ENCODE measurements at regions of chr5 and their contacts with region 1.

Region 1: DNA sequence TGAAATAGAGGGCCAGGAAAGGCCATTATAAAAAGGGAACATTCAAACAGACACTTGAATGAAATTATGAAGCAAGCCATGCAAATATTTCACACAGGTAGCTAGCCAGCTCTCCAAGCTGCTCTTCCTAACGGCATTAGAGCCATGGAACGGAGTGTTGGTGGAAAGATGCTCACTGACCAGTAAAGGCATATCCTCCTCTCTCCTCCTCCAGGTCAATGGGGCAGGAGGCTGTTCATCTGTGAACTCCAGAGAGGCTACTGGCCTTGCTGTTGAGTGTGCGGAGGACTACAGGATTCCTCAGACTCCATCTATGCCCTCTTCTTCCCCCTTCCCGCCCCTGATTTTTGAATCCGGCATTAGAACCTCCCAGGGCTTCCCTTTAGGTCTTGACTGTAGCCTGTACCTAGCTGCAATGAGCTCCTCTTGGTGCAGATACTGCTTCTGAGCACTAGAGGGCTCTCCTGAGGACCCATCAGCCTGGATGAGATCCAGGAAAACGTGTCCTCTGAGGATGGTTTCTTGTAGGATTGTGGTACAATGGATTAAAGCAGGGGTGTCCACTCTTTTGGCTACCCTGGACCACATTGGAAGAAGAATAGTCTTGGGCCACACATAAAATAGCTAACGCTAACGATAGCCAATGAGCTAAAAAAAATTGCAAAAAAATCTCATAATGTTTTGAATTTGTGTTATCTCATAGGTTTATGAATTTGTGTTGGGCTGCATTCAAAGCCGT is 162.2 kb downstream of the SREK1 start:
- DNase-seq: peak; percentile 10
- H3K4me3 Mint-ChIP-seq: no peak overlapping the region
- H3K27ac Mint-ChIP-seq: no peak overlapping the region
- H3K4me1 Mint-ChIP-seq: peaks cover 6% of the 10 kb centered on the region
- H3K27me3 Mint-ChIP-seq: peaks cover 9% of the 10 kb centered on the region

Region 2: GRCh38 chr5:66324357-66324756 is 18.1 kb after region 1 on chr5:
- intact Hi-C with region 1: no loop called
- DNase-seq: no peak
- H3K4me3 Mint-ChIP-seq: no peak overlapping the region
- H3K27ac Mint-ChIP-seq: no peak overlapping the region
- H3K4me1 Mint-ChIP-seq: no peaks in the 10 kb centered on the region
- H3K27me3 Mint-ChIP-seq: no peaks in the 10 kb centered on the region

Region 3: GRCh38 chr5:66498791-66499207 is 192.5 kb after region 1 on chr5:
- intact Hi-C with region 1: loop called (anchors 5 kb)
- DNase-seq: no peak
- H3K4me3 Mint-ChIP-seq: no peak overlapping the region
- H3K27ac Mint-ChIP-seq: no peak overlapping the region
- H3K4me1 Mint-ChIP-seq: no peaks in the 10 kb centered on the region
- H3K27me3 Mint-ChIP-seq: no peaks in the 10 kb centered on the region

Region 4: DNA sequence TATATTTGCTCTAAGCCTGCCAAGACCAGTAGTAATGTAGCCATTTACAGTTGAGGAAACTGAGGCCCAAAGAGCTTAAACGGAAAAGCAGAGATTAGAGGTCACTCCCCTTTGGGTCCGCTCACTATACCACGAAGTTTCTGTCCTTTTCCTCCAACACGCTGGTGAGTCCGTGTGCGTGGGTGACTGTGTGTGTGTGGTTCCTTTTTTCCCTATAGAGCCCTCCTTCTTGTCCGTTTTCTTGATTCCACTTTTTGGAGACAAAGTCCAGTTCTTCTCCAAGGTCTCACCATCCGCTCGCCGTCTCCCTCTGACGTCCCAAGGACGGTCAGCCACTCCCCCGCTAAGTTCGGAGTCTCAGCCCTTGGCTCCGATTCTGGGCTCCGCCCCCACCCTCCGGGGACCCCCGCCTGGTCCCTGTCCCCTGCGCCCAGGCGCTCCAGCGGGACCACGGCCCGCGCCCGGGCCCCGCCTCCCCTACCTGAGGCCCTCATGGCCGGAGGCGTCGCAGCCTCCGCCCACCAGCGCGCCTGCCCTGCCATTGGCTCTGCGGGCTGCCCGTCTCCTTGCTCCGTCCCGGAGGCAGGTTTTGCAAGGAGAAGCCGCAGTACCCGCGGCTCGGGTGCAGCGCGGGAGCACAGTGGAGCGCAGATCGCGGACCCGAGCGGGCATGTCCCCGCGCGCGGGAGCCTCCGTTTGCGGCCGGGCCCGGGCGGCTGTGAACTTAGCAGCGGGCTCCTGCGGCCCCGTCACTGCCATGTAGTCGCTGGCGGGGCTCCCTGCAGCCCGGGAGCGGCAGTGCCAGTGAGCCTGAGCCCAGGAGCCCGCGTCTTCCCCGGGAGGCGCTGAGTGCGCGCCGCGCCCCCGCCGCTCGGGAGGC is 289.7 kb after region 1 on chr5 and contains the start of gene MAST4:
- intact Hi-C with region 1: loop called (anchors 5 kb)
- DNase-seq: peak; percentile 69
- H3K4me3 Mint-ChIP-seq: peak within 1 kb of the TSS; percentile 80
- H3K27ac Mint-ChIP-seq: no peak within 1 kb of the TSS
- H3K4me1 Mint-ChIP-seq: peaks cover 10% of the 10 kb centered on the region
- H3K27me3 Mint-ChIP-seq: peaks cover 64% of the 10 kb centered on the region
- total RNA-seq, gene MAST4: 5.4 and 6.1 TPM in 2 replicates

Region 5: DNA sequence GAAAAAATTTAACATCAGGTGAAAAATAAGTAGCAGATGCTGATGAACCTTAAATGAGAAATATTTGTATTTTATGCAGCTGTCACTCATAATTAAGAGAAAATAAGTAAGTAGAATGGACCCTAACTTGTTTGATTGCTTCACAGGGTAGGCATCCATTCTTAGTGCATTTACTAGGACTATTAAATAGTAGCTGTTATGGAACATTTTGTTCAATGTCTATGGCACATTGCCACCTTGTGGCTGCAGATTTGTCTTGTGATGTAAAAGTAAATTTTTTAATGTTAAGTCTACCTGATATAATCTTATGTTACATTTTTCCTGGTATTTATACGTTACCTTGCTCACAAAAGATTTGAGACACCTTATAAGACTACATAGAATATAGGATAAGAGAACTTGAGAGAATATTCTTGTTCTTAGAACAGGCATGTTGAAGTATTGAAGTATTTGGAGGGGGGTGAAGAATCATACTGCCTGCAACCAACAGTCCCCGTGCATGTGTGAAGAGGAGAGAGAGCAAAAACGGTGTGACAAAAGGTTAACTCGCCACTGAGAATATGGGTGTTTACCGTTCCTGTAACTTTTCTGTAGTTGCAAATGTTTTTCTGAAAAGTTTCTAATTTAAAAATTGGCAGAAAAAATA is 451.0 kb after region 1 on chr5:
- intact Hi-C with region 1: loop called (anchors 1 kb)
- DNase-seq: no peak
- H3K4me3 Mint-ChIP-seq: no peak overlapping the region
- H3K27ac Mint-ChIP-seq: no peak overlapping the region
- H3K4me1 Mint-ChIP-seq: no peaks in the 10 kb centered on the region
- H3K27me3 Mint-ChIP-seq: peaks cover 28% of the 10 kb centered on the region

Region 6: GRCh38 chr5:66864331-66864840 is 558.1 kb after region 1 on chr5:
- intact Hi-C with region 1: loop called (anchors 5 kb)
- DNase-seq: no peak
- H3K4me3 Mint-ChIP-seq: no peak overlapping the region
- H3K27ac Mint-ChIP-seq: no peak overlapping the region
- H3K4me1 Mint-ChIP-seq: peaks cover 16% of the 10 kb centered on the region
- H3K27me3 Mint-ChIP-seq: peaks cover 44% of the 10 kb centered on the region

Measured in activated T-helper 2 cell treated with anti-CD3 and anti-CD28 coated beads, Interferon-gamma antibody, Interleukin-2, Interleukin-4, amounts not matched to agents 10 μg/mL and 5 μg/mL and 100 μg/mL, durations not matched to agents 14 hours and 24 hours and 36 hours (primary cell).